Activated CD8-positive, alpha-beta T cell treated with anti-CD3 and anti-CD28 coated beads, Interleukin-2, amount 10 ng/mL, durations not matched to agents 7 days and 5 days (primary cell): ENCODE measurements at regions of chr10 and their contacts with region 1.

Region 1: DNA sequence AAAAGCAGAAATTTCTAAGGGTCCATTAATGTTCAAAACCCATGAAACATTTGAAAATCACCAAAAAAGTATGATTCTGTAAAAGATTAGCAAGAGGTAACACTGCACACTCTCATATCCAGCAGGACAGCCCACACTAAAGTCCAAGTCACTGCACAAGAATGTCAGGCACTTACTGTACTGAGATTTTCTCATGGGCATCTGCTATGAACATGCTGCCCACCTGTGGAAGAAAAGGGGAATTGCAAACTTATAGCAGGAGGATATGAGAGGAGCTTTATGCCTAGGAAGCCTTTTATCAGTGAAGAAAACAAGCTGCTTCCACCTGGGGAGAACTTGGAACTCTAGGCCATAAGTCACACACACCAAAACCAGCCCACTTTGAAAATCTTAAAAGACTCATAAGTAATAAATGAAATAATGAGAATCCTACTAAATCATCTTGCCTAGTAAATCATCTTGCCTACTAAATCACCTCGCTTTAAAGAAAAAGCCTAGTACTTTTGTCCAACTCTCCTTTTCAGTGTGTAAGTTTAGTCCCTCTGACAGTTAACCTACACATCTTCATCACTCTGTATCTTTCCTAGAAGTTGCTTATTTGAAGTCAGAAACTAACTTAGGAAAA is 46.1 kb downstream of the ARMH3 start:
- DNase-seq: peak; percentile 56
- ATAC-seq: peak; percentile 88
- H3K4me3 Mint-ChIP-seq: no peak overlapping the region
- H3K27ac Mint-ChIP-seq: no peak overlapping the region
- H3K4me1 Mint-ChIP-seq: no peaks in the 10 kb centered on the region
- H3K27me3 Mint-ChIP-seq: no peaks in the 10 kb centered on the region

Region 2: GRCh38 chr10:101744267-101744666 is 265.6 kb before region 1 on chr10:
- CTCF ChIA-PET with region 1: no interaction called
- POLR2A ChIA-PET with region 1: no interaction called
- DNase-seq: no peak
- ATAC-seq: no peak
- H3K4me3 Mint-ChIP-seq: no peak overlapping the region
- H3K27ac Mint-ChIP-seq: no peak overlapping the region
- H3K4me1 Mint-ChIP-seq: no peaks in the 10 kb centered on the region
- H3K27me3 Mint-ChIP-seq: peaks cover 22% of the 10 kb centered on the region

Region 3: DNA sequence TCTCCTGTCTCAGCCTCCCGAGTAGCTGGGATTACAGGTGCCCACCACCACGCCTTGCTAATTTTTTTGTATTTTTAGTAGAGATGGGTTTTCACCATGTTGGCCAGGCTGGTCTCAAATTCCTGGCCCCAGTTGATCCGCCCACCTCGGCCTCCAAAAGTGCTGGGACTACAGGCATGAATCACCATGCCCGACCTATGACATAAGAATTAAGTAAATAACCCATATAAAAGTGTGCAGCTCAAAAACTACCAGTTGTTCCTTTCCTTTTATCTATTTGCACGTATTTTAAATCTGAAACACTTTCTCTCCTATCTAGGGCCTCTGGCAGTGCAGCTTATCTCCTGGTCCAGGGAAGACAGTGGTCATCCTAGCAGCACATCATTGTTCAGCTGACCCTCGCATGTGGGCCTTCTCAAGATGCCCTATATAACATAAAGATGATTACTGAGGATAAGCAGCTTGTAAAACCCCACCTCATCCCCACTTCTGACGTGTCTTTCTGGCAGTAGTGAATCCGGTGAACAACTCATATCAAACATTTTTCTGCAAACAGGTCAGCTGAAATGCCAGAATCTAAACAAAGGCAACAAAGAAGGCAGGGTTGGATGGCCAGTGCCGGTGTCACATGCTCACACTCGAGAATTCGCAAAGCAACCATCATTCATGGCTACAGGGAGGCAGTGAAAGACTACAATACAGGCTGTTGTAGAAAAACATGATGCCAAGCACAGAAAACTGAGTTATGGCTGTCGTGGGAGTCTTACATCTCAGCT is 130.3 kb before region 1 on chr10:
- CTCF ChIA-PET with region 1: interaction called, 15 read pairs
- POLR2A ChIA-PET with region 1: no interaction called
- DNase-seq: no peak
- ATAC-seq: no peak
- H3K4me3 Mint-ChIP-seq: no peak overlapping the region
- H3K27ac Mint-ChIP-seq: no peak overlapping the region
- H3K4me1 Mint-ChIP-seq: peaks cover 15% of the 10 kb centered on the region
- H3K27me3 Mint-ChIP-seq: no peaks in the 10 kb centered on the region

Region 4: DNA sequence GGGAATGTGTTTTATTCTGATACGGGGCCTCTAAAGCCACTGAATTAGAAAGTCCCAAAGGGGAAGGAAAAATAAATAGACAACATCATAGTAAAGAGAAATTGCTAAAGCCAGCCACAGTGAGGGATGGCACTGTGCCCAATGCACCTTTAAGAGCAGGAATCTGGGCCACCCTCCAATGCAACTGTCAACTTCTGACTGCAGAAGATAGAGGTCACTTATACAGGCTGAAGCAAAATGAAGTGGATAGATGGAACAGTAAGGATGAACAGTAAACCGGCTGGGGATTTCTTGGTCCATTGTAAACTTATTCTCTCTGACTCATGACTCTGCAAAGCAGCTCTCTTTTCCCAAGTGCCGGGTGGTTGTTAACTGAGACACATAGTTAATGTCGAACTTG is 112.3 kb before region 1 on chr10:
- CTCF ChIA-PET with region 1: interaction called, 121 read pairs
- POLR2A ChIA-PET with region 1: no interaction called
- DNase-seq: no peak
- ATAC-seq: no peak
- H3K4me3 Mint-ChIP-seq: no peak overlapping the region
- H3K27ac Mint-ChIP-seq: no peak overlapping the region
- H3K4me1 Mint-ChIP-seq: no peaks in the 10 kb centered on the region
- H3K27me3 Mint-ChIP-seq: no peaks in the 10 kb centered on the region

Region 5: DNA sequence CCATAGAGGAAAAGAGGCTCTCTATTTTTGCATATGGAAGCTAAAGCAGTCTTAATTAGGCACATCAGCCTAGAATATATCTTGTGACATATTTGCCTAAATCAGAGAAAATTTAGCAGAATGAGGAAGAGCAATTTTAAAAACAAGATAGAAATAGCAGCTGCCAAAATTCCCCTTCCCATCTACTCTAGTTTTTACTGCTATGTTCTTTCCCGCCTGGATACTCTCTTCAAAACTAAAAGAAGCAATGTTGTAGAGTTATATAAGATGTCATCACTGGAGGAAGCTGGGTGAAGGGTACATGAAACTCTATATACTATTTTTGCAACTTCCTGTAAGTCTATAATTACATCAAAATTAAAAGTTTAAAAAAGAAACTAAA is 41.0 kb before region 1 on chr10:
- CTCF ChIA-PET with region 1: interaction called, 11 read pairs
- POLR2A ChIA-PET with region 1: no interaction called
- DNase-seq: no peak
- ATAC-seq: no peak
- H3K4me3 Mint-ChIP-seq: no peak overlapping the region
- H3K27ac Mint-ChIP-seq: peak overlapping the region; percentile 5
- H3K4me1 Mint-ChIP-seq: peaks cover 34% of the 10 kb centered on the region
- H3K27me3 Mint-ChIP-seq: no peaks in the 10 kb centered on the region

Region 6: GRCh38 chr10:102020938-102021337 is 11.0 kb after region 1 on chr10:
- CTCF ChIA-PET with region 1: interaction called, 22 read pairs
- POLR2A ChIA-PET with region 1: interaction called, 3 read pairs
- DNase-seq: peak; percentile 54
- ATAC-seq: peak; percentile 53
- H3K4me3 Mint-ChIP-seq: no peak overlapping the region
- H3K27ac Mint-ChIP-seq: no peak overlapping the region
- H3K4me1 Mint-ChIP-seq: peaks cover 3% of the 10 kb centered on the region
- H3K27me3 Mint-ChIP-seq: no peaks in the 10 kb centered on the region

Region 7: GRCh38 chr10:102055647-102056419 is 45.9 kb after region 1 on chr10 and contains the start of gene ARMH3:
- CTCF ChIA-PET with region 1: interaction called, 10 read pairs
- POLR2A ChIA-PET with region 1: no interaction called
- DNase-seq: peak; percentile 95
- ATAC-seq: peak; percentile 96
- H3K4me3 Mint-ChIP-seq: peak within 1 kb of the TSS; percentile 98
- H3K27ac Mint-ChIP-seq: peak within 1 kb of the TSS; percentile 98
- H3K4me1 Mint-ChIP-seq: peaks cover 39% of the 10 kb centered on the region
- H3K27me3 Mint-ChIP-seq: no peaks in the 10 kb centered on the region
- total RNA-seq, gene ARMH3: 25.2 to 26.3 TPM